Panc1 (cell line): ENCODE measurements at regions of chr3 and their contacts with region 1.

Region 1: GRCh38 chr3:141011232-141011996 is 39.7 kb upstream of the SPSB4 start:
- DNase-seq: peak; percentile 36
- ATAC-seq: peak; percentile 95
- H3K4me3 ChIP-seq: no peak overlapping the region
- H3K27ac ChIP-seq: no peak overlapping the region
- H3K4me1 ChIP-seq: no peaks in the 10 kb centered on the region
- H3K27me3 ChIP-seq: peaks cover 15% of the 10 kb centered on the region
- CTCF ChIP-seq: peak; percentile 94

Region 2: DNA sequence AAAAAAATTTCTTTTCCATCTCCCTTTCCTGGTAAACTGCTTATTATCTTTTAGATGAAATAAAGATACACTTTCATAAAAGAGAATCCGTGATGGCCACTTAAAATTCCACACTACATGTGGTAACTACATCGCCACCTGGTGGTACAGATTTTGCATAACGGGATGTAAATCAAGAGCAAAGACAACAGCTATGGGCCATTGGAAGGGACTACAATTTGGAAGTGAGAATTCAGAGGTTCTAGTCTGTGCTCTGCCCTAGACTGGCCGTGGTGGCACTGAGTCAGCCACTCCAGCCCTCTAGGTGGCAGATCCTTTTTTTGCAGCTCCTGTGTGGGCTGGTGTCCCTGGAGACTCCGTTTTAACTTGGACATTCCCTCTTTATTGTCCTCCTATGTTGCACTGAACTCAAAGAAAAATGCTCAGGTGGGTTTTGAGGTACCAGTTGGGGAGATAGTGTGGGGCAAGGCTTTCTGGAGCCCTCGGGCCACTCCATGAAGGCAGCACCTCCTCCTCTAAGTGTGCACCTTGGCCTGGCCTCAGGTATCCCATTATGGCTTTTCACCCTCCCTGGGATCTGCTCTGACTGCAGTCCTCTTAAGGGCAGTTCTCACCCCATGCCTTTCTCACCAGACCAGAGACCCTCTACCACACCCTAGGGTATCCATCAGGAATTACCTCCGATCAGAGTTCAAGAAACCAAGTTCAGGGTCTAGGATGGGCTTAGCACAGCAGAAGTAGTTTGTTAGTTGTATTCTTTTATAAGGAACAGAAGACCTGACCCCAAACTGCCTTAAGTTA is 94.6 kb after region 1 on chr3:
- CTCF ChIA-PET with region 1: no interaction called
- POLR2A ChIA-PET with region 1: no interaction called
- in situ Hi-C with region 1: no loop called
- intact Hi-C with region 1: loop called (anchors 1 kb)
- DNase-seq: peak; percentile 67
- ATAC-seq: peak; percentile 80
- H3K4me3 ChIP-seq: no peak overlapping the region
- H3K27ac ChIP-seq: no peak overlapping the region
- H3K4me1 ChIP-seq: no peaks in the 10 kb centered on the region
- H3K27me3 ChIP-seq: no peaks in the 10 kb centered on the region
- CTCF ChIP-seq: peak; percentile 85